ENCODE measurements at regions of chr6 and their contacts with region 1.

Region 1: GRCh38 chr6:10521104-10521808 is at the start of gene GCNT2:
- DNase-seq: no peak
- ATAC-seq: peak; percentile 79
- total RNA-seq, gene GCNT2: 51.9 TPM

Region 2: DNA sequence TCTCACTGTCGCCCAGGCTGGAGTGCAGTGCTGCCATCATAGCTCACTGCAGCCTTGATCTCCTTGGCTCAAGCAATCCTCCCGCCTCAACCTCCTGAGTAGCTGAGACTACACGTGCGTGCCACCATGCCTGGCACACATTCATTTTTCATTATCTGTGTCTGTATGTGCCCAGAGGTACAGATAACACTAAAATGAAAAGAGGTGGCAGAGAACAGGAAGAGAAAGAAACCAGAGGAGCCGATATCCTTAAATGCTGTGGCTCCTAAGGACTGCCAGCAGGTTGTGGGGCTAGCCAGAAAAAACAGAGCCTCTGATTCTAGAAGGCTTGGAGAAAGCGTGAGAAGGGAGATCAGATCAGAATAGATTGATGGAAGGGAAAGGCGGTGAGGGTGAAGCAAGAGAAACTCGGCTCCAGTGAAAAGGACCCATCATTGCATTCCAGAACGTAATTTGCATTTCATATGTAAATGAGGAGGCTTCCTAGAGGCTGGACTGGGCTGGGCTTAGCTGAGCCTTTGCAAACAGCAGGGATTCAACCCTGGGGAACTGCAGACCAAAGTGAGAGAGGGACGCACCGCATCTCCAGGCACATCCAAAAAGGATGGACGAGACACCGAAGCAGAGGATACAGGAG is 64.1 kb after region 1 on chr6:
- intact Hi-C with region 1: loop called (anchors 2 kb)
- DNase-seq: no peak
- ATAC-seq: peak; percentile 55

Measured in Right ventricle myocardium inferior (tissue), 1 donor.